Mammary epithelial cell (primary cell): ENCODE measurements at regions of chr14 and their contacts with region 1.

Region 1: GRCh38 chr14:76947078-76947837 is 81.2 kb downstream of the IRF2BPL start:
- DNase-seq: peak; percentile 83
- H3K4me3 ChIP-seq: no peak overlapping the region
- H3K27ac ChIP-seq: peak overlapping the region; percentile 58
- H3K4me1 ChIP-seq: peaks cover 45% of the 10 kb centered on the region
- H3K27me3 ChIP-seq: no peaks in the 10 kb centered on the region
- CTCF ChIP-seq: peak; percentile 16 to 74

Region 2: GRCh38 chr14:76910371-76910890 is 36.8 kb before region 1 on chr14:
- CTCF ChIA-PET with region 1: interaction called, 6 read pairs
- dilution Hi-C with region 1: no loop called
- in situ Hi-C with region 1: loop called (anchors 5 kb)
- intact Hi-C with region 1: loop called (anchors 1 kb)
- DNase-seq: no peak
- H3K4me3 ChIP-seq: no peak overlapping the region
- H3K27ac ChIP-seq: no peak overlapping the region
- H3K4me1 ChIP-seq: peaks cover 27% of the 10 kb centered on the region
- H3K27me3 ChIP-seq: no peaks in the 10 kb centered on the region
- CTCF ChIP-seq: no peak

Region 3: DNA sequence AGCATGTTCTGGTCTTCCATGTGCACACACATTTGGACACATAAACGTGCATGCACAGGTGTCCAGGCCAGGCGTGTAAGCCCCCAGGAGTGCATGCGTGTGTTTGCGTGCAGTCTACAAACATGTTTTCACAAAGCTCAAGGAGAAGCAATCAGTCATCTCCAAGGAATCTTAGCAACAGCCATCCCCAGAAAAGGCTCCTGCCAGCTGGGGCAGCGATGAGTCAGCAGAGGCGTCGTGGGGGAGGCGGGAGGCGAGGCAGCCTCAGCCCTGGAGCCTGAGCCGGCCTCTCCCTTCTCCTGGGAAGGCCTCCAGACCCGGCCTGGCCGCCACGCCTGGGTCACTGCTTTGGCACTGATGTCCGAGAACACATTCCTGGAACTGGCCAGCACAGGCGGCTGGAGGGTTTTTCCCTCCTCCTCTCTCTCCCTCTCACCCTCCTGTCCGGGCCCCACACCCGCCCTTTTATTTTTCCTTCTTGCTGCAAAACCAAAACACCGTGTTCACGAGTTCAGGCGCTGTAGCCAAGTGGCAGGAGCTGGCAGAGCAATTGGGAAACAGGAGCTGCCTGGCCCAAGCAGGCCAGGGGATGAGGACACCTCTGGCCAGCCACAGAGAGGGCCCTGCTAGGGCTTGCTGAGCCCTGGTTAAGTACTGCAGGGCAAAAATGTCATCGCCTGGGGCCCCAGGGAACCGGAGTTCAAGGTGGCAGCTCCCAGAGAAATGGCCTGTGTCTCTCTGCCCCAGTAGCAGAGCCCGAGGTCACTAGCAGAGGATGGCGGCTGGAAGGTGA is 28.3 kb before region 1 on chr14:
- CTCF ChIA-PET with region 1: interaction called, 6 read pairs
- dilution Hi-C with region 1: no loop called
- in situ Hi-C with region 1: loop called (anchors 5 kb)
- intact Hi-C with region 1: loop called (anchors 1 kb)
- DNase-seq: peak; percentile 96
- H3K4me3 ChIP-seq: no peak overlapping the region
- H3K27ac ChIP-seq: peak overlapping the region; percentile 88
- H3K4me1 ChIP-seq: peaks cover 44% of the 10 kb centered on the region
- H3K27me3 ChIP-seq: no peaks in the 10 kb centered on the region
- CTCF ChIP-seq: peak in 1 of 2 donors; percentile 28